GM12878 (cell line): ENCODE measurements at regions of chr10 and their contacts with region 1.

Region 1: GRCh38 chr10:100229819-100230422 is 525 bp upstream of the CHUK start:
- DNase-seq: no peak
- ATAC-seq: no peak
- H3K4me3 ChIP-seq: peak overlapping the region; percentile 86
- H3K27ac ChIP-seq: peak overlapping the region; percentile 87
- H3K4me1 ChIP-seq: peaks cover 3% of the 10 kb centered on the region; the same call in 1 of the 2 replicates
- H3K27me3 ChIP-seq: no peaks in the 10 kb centered on the region
- CTCF ChIP-seq: no peak
- EP300 ChIP-seq: no peak
- POLR2A ChIP-seq: no peak
- RAD21 ChIP-seq: no peak

Region 2: DNA sequence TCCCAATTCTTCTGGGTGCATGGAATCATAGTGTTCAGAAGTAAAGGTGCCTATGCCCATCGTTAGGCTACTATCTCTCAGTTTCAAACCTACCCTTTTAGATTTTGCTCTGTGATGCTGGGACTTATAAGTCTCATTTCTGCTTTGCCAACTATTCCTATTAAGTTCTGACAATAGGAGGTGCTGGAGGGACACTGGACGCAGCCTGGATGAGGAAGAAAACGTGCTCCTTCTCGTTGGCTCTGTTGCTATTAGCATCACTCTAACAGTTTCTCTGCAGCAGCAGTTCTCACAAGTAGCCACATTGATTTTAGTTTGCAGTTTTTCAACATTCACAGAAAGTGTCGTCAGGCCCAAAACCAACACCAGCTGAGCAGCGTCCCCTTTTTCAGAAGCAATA is 375.1 kb before region 1 on chr10:
- CTCF ChIA-PET with region 1: interaction called, 3 read pairs
- POLR2A ChIA-PET with region 1: no interaction called
- RAD21 ChIA-PET with region 1: no interaction called
- SMC1A ChIA-PET with region 1: no interaction called
- in situ Hi-C with region 1: no loop called
- intact Hi-C with region 1: loop called (anchors 10 kb)
- DNase-seq: no peak
- ATAC-seq: no peak
- H3K4me3 ChIP-seq: no peak overlapping the region
- H3K27ac ChIP-seq: no peak overlapping the region
- H3K4me1 ChIP-seq: no peaks in the 10 kb centered on the region
- H3K27me3 ChIP-seq: no peaks in the 10 kb centered on the region
- CTCF ChIP-seq: peak in 1 of 3 experiments; percentile 26; a peak in 1 of 6 replicates
- EP300 ChIP-seq: no peak
- POLR2A ChIP-seq: no peak
- RAD21 ChIP-seq: peak; percentile 31; the same call in 1 of the 2 replicates

Region 3: GRCh38 chr10:101041252-101041761 is 811.4 kb after region 1 on chr10:
- CTCF ChIA-PET with region 1: no interaction called
- POLR2A ChIA-PET with region 1: no interaction called
- RAD21 ChIA-PET with region 1: no interaction called
- SMC1A ChIA-PET with region 1: no interaction called
- in situ Hi-C with region 1: no loop called
- intact Hi-C with region 1: no loop called
- DNase-seq: no peak
- ATAC-seq: peak; percentile 89
- H3K4me3 ChIP-seq: no peak overlapping the region
- H3K27ac ChIP-seq: no peak overlapping the region
- H3K4me1 ChIP-seq: peaks cover 5% of the 10 kb centered on the region; the same call in 1 of the 2 replicates
- H3K27me3 ChIP-seq: no peaks in the 10 kb centered on the region
- CTCF ChIP-seq: peak; percentile 84 to 92 (median 88)
- EP300 ChIP-seq: no peak
- POLR2A ChIP-seq: no peak
- RAD21 ChIP-seq: peak; percentile 93